Vagina (tissue), 2 donors: ENCODE measurements at regions of chr1 and their contacts with region 1.

Region 1: GRCh38 chr1:180154325-180155181 is at the start of gene QSOX1:
- DNase-seq: peak; percentile 92 to 96
- H3K4me3 ChIP-seq: peak within 1 kb of the TSS; percentile 72 to 91
- H3K27ac ChIP-seq: peak within 1 kb of the TSS; percentile 83
- H3K4me1 ChIP-seq: peaks cover 42% of the 10 kb centered on the region
- H3K27me3 ChIP-seq: no peaks in the 10 kb centered on the region
- CTCF ChIP-seq: peak in 1 of 3 experiments; percentile 4
- POLR2A ChIP-seq: peak in 1 of 2 donors; percentile 88
- total RNA-seq, gene QSOX1: 103 TPM

Region 2: DNA sequence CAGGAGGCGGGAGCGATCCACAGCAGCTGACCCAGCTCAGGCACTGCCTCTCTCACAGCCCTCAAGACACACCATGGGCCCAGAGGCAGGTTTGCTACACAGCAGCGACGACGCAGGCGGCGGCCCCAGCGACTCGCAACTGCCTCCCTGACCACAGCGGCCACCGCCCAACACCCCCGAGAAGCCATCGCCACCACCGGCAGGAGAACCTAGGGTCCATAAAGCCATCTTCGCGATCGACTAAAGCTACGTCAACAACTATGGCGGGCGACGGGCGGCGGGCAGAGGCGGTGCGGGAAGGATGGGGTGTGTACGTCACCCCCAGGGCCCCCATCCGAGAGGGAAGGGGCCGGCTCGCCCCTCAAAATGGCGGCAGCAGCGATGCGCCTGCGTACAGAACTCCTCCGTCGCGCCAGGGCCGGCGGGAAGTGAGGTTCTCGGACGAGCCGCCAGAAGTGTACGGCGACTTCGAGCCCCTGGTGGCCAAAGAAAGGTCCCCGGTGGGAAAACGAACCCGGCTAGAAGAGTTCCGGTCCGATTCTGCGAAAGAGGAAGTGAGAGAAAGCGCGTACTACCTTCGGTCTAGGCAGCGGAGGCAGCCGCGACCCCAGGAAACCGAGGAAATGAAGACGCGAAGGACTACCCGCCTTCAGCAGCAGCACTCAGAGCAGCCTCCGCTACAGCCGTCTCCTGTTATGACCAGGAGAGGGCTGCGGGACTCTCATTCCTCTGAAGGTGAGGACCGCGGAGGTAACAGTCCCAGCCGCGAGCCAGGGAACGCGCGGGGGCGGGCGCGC is 272.1 kb before region 1 on chr1 and contains the start of gene TOR1AIP1:
- intact Hi-C with region 1: loop called (anchors 10 kb)
- DNase-seq: peak in 1 of 2 donors; percentile 98
- H3K4me3 ChIP-seq: peak within 1 kb of the TSS; percentile 81 to 96
- H3K27ac ChIP-seq: peak within 1 kb of the TSS; percentile 100
- H3K4me1 ChIP-seq: peaks cover 54% of the 10 kb centered on the region
- H3K27me3 ChIP-seq: no peaks in the 10 kb centered on the region
- CTCF ChIP-seq: peak in 2 of 3 experiments; percentile 15 to 64
- POLR2A ChIP-seq: peak in 1 of 2 donors; percentile 77
- total RNA-seq, gene TOR1AIP1: 45.9 TPM

Region 3: GRCh38 chr1:180213401-180214170 is 59.0 kb after region 1 on chr1:
- intact Hi-C with region 1: no loop called
- DNase-seq: no peak
- H3K4me3 ChIP-seq: no peak overlapping the region
- H3K27ac ChIP-seq: no peak overlapping the region
- H3K4me1 ChIP-seq: no peaks in the 10 kb centered on the region
- H3K27me3 ChIP-seq: no peaks in the 10 kb centered on the region
- CTCF ChIP-seq: no peak
- POLR2A ChIP-seq: no peak